GM12878 (cell line): ENCODE measurements at regions of chr22 and their contacts with region 1.

Region 1: DNA sequence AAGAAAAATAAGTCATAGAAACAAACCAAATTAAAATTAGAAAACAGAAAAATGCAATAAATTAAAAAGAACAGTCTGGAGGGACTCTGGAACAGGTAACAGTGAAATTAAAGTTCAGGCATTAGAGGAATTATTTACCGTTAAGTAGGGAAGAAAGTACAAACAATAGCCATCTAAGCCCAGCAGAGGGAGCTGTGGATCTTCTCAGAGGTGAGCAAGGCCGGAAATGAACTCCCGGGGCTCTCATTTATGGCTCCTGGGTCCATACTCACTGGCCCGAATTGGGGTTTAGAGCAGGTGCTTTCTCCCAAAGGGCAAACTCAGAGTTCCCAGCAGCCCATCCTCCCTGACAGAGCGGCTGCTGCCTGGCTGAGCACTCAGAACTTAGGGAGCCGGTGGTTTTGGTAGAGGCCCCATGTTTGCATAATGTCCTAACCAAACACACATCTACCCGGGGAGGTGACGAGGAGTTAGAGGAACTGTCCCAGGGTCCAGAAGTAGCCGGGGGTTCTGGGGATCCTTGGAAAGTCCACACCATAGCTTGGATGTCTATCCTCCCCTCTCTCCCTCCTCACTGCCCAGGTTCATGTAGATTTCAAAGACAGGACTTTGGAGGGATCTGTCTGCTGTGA is 87.8 kb upstream of the VPREB1 start:
- DNase-seq: peak; percentile 59
- ATAC-seq: peak; percentile 94
- H3K4me3 ChIP-seq: no peak overlapping the region
- H3K27ac ChIP-seq: peak overlapping the region; percentile 86
- H3K4me1 ChIP-seq: peaks cover 10% of the 10 kb centered on the region
- H3K27me3 ChIP-seq: no peaks in the 10 kb centered on the region
- CTCF ChIP-seq: peak; percentile 67 to 79 (median 75)
- EP300 ChIP-seq: 0 out of 4 replicates have a peak, but pooled peaks of 1 of the 2 experiments have one; percentile 23
- POLR2A ChIP-seq: peak; percentile 41
- RAD21 ChIP-seq: peak; percentile 80

Region 2: DNA sequence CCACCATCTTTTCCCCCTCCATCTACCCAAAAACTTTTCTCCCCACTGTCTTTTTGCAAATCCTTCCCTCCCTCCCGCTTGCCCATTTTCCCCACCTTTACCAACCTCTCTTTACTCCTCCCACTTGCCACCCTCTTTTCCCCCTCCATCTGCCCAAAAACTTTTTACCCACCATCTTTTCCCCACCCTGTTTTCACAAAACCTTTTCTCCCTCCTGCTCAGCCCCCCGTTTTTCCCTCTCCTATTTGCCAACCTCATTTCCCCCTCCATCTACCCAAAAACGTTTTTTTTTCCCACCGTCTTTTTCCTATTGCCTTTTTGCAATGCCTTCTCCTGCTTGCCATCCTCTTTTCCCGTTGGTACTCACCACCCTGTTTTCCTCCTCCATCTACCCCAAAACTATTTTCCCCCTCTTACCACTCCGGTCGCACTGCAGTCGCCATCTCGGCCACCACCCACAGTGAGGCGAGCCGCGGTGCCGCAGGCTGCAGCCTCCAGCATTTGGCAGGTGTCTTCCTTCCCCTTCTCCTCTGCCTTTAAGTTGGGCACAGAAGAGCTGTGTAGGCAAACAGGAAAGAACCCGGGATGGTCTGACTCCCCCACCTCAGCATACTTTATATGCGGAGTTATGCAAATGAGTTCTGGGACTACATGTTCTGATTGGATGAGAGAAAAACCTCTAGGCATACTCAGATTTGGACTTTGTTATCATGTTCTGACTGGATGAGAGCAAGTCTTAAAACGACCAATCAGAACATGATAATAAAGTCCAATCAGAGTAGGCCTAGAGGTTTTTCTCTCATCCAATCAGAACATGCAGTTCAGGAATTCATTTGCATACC is 33.5 kb before region 1 on chr22:
- CTCF ChIA-PET with region 1: interaction called, 9 read pairs
- POLR2A ChIA-PET with region 1: no interaction called
- RAD21 ChIA-PET with region 1: interaction called, 9 read pairs
- SMC1A ChIA-PET with region 1: interaction called, 13 read pairs
- in situ Hi-C with region 1: no loop called
- intact Hi-C with region 1: no loop called
- DNase-seq: no peak
- ATAC-seq: no peak
- H3K4me3 ChIP-seq: no peak overlapping the region
- H3K27ac ChIP-seq: no peak overlapping the region
- H3K4me1 ChIP-seq: no peaks in the 10 kb centered on the region
- H3K27me3 ChIP-seq: no peaks in the 10 kb centered on the region
- CTCF ChIP-seq: no peak
- EP300 ChIP-seq: no peak
- POLR2A ChIP-seq: no peak
- RAD21 ChIP-seq: no peak

Region 3: DNA sequence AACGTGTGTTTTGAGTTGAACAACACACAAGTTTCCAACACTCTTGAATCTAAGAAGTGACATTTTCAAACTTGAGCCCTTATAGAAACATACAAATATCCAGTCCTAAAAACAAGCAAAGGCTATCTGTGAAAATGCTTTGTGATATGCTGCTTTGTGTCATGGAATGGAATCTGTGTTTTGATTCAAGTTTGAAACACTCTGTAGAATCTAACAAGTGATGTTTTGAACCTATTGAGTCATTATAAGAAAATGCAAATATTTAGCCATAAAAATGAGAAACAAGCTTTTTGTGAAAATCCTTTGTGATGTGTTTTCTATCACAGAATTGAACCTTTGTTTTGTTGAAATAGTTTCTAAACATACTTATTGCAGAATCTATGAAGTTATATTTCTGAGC is 17.9 kb before region 1 on chr22:
- CTCF ChIA-PET with region 1: interaction called, 13 read pairs
- POLR2A ChIA-PET with region 1: interaction called, 3 read pairs
- RAD21 ChIA-PET with region 1: no interaction called
- SMC1A ChIA-PET with region 1: interaction called, 10 read pairs
- in situ Hi-C with region 1: no loop called
- intact Hi-C with region 1: no loop called
- DNase-seq: no peak
- ATAC-seq: no peak
- H3K4me3 ChIP-seq: no peak overlapping the region
- H3K27ac ChIP-seq: no peak overlapping the region
- H3K4me1 ChIP-seq: no peaks in the 10 kb centered on the region
- H3K27me3 ChIP-seq: no peaks in the 10 kb centered on the region
- CTCF ChIP-seq: no peak
- EP300 ChIP-seq: no peak
- POLR2A ChIP-seq: no peak
- RAD21 ChIP-seq: no peak

Region 4: DNA sequence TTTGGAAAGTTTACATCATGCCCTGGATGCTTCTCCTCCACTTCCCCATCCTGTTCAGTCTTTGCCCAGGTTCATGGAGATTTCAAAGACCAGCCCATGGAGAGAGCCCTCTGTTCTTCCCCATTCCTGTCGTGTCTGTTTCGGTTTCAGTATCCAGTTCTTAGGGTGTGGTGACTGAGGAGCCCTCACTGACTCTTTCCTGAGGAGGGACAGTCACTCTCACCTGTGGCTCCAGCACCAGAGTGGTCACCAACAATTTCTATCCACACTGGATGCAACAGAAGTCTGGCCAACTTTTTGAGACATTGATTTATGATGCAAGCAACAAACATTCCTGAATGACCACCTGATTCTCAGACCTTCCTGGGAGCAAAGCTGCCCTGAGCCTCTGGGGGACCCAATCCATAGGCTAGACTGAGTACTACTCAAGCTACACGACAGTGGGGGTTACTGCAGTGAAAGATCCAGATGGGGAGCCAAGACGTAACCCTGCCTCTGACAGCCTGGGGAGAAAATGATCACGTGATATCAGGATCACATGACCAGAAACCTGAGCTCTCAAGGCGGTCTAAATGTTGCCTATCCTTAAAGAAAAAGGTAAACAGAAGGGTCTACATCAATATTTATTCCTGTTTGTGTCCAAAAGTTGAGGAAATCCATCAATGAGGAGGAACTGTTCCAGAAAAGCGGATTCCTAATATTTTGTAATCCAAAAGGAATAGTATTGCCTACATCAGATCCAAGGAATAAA is 11.5 kb after region 1 on chr22:
- CTCF ChIA-PET with region 1: interaction called, 61 read pairs
- POLR2A ChIA-PET with region 1: interaction called, 5 read pairs
- RAD21 ChIA-PET with region 1: interaction called, 34 read pairs
- SMC1A ChIA-PET with region 1: interaction called, 47 read pairs
- in situ Hi-C with region 1: no loop called
- intact Hi-C with region 1: loop called (anchors 1 kb)
- DNase-seq: peak; percentile 57
- ATAC-seq: peak; percentile 74
- H3K4me3 ChIP-seq: peak overlapping the region; percentile 52; the same call in 1 of the 2 replicates
- H3K27ac ChIP-seq: peak overlapping the region; percentile 83
- H3K4me1 ChIP-seq: peaks cover 15% of the 10 kb centered on the region
- H3K27me3 ChIP-seq: no peaks in the 10 kb centered on the region
- CTCF ChIP-seq: no peak
- EP300 ChIP-seq: no peak
- POLR2A ChIP-seq: no peak; the same call in 1 of the 2 replicates
- RAD21 ChIP-seq: no peak

Region 5: DNA sequence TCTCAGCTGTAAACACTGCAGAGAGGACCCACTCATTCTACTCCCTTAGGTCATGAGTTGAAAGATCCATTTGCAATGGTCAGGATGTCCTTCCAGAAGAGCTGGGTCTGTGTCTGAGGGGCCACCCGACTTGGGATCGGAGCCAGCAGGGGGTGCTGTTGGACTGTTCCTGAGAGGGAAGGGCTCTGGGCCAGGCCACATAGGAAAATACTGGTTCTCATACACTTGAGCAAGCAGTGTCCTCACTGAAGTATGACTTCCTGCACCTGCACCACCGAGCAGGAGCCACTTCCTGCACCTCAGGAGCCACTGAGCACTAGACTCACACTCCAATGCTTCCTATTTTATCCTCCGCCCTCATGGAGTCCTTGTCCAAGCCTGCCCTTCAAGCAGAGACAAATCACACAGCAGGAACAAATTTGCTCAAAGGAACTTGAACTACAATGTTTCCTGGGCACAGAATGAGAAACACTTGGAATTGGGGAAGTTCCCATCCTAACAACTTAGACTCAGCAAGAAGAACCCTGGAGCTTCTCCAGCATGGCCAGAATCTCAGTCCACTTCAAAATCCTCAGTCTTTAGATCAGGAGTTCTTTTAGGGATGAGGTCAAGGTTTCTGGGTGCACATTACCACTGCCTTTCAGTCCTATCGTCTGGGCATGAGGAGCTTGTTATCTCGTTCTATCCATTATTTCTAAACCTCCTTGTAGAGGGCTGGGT is 51.2 kb after region 1 on chr22:
- CTCF ChIA-PET with region 1: interaction called, 33 read pairs
- POLR2A ChIA-PET with region 1: interaction called, 6 read pairs
- RAD21 ChIA-PET with region 1: interaction called, 6 read pairs
- SMC1A ChIA-PET with region 1: interaction called, 4 read pairs
- in situ Hi-C with region 1: no loop called
- intact Hi-C with region 1: loop called (anchors 2 kb)
- DNase-seq: peak; percentile 62
- ATAC-seq: peak; percentile 94
- H3K4me3 ChIP-seq: no peak overlapping the region
- H3K27ac ChIP-seq: peak overlapping the region; percentile 45
- H3K4me1 ChIP-seq: peaks cover 3% of the 10 kb centered on the region
- H3K27me3 ChIP-seq: no peaks in the 10 kb centered on the region
- CTCF ChIP-seq: peak; percentile 66 to 78 (median 69); a peak in 5 of 6 replicates
- EP300 ChIP-seq: no peak
- POLR2A ChIP-seq: 0 out of 2 replicates have a peak, but pooled peaks have one; percentile 35
- RAD21 ChIP-seq: peak; percentile 81

Region 6: GRCh38 chr22:22935546-22936157 is 778.8 kb after region 1 on chr22:
- CTCF ChIA-PET with region 1: interaction called, 18 read pairs
- POLR2A ChIA-PET with region 1: no interaction called
- RAD21 ChIA-PET with region 1: interaction called, 15 read pairs
- SMC1A ChIA-PET with region 1: interaction called, 7 read pairs
- in situ Hi-C with region 1: no loop called
- intact Hi-C with region 1: no loop called
- DNase-seq: peak; percentile 99
- ATAC-seq: peak; percentile 84
- H3K4me3 ChIP-seq: peak overlapping the region; percentile 24; the same call in 1 of the 2 replicates
- H3K27ac ChIP-seq: peak overlapping the region; percentile 99
- H3K4me1 ChIP-seq: peaks cover 92% of the 10 kb centered on the region
- H3K27me3 ChIP-seq: no peaks in the 10 kb centered on the region
- CTCF ChIP-seq: peak; percentile 53 to 83 (median 71)
- EP300 ChIP-seq: peak; percentile 100
- POLR2A ChIP-seq: no peak; the same call in 1 of the 2 replicates
- RAD21 ChIP-seq: peak; percentile 75